IMR-90 (cell line): ENCODE measurements at regions of chr6 and their contacts with region 1.

Region 1: DNA sequence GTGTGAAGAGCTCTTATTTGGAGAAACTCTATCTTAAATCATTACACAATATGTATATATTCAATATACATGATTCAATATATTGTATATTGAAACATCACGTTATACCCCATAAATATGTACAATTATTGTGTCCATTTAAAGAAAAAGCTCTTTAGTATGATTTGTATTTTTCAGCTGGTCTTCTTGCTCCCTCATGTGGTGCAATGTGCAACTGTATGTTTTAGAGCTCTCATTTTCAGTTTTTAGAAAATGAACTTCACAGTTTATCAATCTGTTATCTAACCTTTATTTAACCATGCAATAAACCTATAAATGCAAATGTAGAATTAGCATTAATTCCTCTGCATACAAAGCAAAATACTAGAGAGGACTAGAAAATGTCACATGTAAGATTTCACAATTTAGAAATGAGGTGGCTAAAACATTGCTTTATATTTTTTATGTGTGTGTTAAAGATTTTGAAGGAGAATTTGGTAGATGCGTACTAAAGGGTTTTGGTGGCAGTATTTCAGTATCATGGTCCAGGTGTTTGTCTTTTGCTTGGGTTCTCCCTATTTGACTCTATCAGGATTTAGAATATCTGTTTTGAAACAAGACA is 167.1 kb downstream of the PHF3 start:
- DNase-seq: peak; percentile 53
- ATAC-seq: no peak
- H3K4me3 ChIP-seq: no peak overlapping the region
- H3K27ac ChIP-seq: no peak overlapping the region
- H3K4me1 ChIP-seq: peaks cover 15% of the 10 kb centered on the region
- H3K27me3 ChIP-seq: no peaks in the 10 kb centered on the region
- CTCF ChIP-seq: peak; percentile 83
- POLR2A ChIP-seq: no peak
- RAD21 ChIP-seq: peak; percentile 86

Region 2: GRCh38 chr6:63307581-63308246 is 495.0 kb before region 1 on chr6:
- CTCF ChIA-PET with region 1: no interaction called
- POLR2A ChIA-PET with region 1: no interaction called
- dilution Hi-C with region 1: no loop called
- in situ Hi-C with region 1: no loop called
- intact Hi-C with region 1: loop called (anchors 1 kb)
- DNase-seq: peak; percentile 64
- ATAC-seq: peak; percentile 91
- H3K4me3 ChIP-seq: no peak overlapping the region
- H3K27ac ChIP-seq: no peak overlapping the region
- H3K4me1 ChIP-seq: no peaks in the 10 kb centered on the region
- H3K27me3 ChIP-seq: no peaks in the 10 kb centered on the region
- CTCF ChIP-seq: peak; percentile 63
- POLR2A ChIP-seq: no peak
- RAD21 ChIP-seq: peak; percentile 69

Region 3: GRCh38 chr6:63663147-63663877 is 139.4 kb before region 1 on chr6:
- CTCF ChIA-PET with region 1: no interaction called
- POLR2A ChIA-PET with region 1: no interaction called
- dilution Hi-C with region 1: no loop called
- in situ Hi-C with region 1: no loop called
- intact Hi-C with region 1: no loop called
- DNase-seq: peak; percentile 85
- ATAC-seq: peak; percentile 93
- H3K4me3 ChIP-seq: no peak overlapping the region
- H3K27ac ChIP-seq: no peak overlapping the region
- H3K4me1 ChIP-seq: peaks cover 5% of the 10 kb centered on the region
- H3K27me3 ChIP-seq: no peaks in the 10 kb centered on the region
- CTCF ChIP-seq: no peak
- POLR2A ChIP-seq: no peak
- RAD21 ChIP-seq: no peak